GM12878 (cell line): ENCODE measurements at regions of chr6 and their contacts with region 1.

Region 1: DNA sequence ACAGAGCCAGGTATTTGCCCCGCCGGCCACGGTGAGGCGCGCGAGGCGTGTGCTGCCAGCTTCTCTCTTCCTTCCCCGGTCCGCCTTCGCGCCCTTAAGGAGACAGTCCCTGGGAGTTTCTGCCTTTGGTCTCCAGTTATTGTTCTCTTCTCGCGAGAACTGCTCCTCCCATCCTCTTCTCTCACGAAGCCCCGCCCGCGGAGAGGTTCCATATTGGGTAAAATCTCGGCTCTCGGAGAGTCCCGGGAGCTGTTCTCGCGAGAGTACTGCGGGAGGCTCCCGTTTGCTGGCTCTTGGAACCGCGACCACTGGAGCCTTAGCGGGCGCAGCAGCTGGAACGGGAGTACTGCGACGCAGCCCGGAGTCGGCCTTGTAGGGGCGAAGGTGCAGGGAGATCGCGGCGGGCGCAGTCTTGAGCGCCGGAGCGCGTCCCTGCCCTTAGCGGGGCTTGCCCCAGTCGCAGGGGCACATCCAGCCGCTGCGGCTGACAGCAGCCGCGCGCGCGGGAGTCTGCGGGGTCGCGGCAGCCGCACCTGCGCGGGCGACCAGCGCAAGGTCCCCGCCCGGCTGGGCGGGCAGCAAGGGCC is at the start of gene MAPK14:
- DNase-seq: peak; percentile 96
- ATAC-seq: peak; percentile 87
- H3K4me3 ChIP-seq: peak within 1 kb of the TSS; percentile 87
- H3K27ac ChIP-seq: peak within 1 kb of the TSS; percentile 84
- H3K4me1 ChIP-seq: no peaks in the 10 kb centered on the region; the same call in 1 of the 2 replicates
- H3K27me3 ChIP-seq: no peaks in the 10 kb centered on the region; a peak in 1 of 4 replicates
- CTCF ChIP-seq: peak; percentile 95 to 99 (median 97); a peak in 5 of 6 replicates
- EP300 ChIP-seq: no peak
- POLR2A ChIP-seq: peak; percentile 96
- RAD21 ChIP-seq: peak; percentile 94
- polyA plus RNA-seq, gene MAPK14: 12.5 to 13.7 TPM

Region 2: GRCh38 chr6:35294308-35294945 is 733.2 kb before region 1 on chr6:
- CTCF ChIA-PET with region 1: no interaction called
- POLR2A ChIA-PET with region 1: no interaction called
- RAD21 ChIA-PET with region 1: no interaction called
- SMC1A ChIA-PET with region 1: no interaction called
- in situ Hi-C with region 1: no loop called
- intact Hi-C with region 1: no loop called
- DNase-seq: no peak
- ATAC-seq: peak; percentile 34
- H3K4me3 ChIP-seq: no peak overlapping the region
- H3K27ac ChIP-seq: no peak overlapping the region
- H3K4me1 ChIP-seq: peaks cover 7% of the 10 kb centered on the region
- H3K27me3 ChIP-seq: no peaks in the 10 kb centered on the region
- CTCF ChIP-seq: peak; percentile 79 to 87 (median 79)
- EP300 ChIP-seq: no peak
- POLR2A ChIP-seq: no peak
- RAD21 ChIP-seq: peak; percentile 65

Region 3: GRCh38 chr6:35943056-35943789 is 84.4 kb before region 1 on chr6:
- CTCF ChIA-PET with region 1: no interaction called
- POLR2A ChIA-PET with region 1: no interaction called
- RAD21 ChIA-PET with region 1: no interaction called
- SMC1A ChIA-PET with region 1: no interaction called
- in situ Hi-C with region 1: no loop called
- intact Hi-C with region 1: no loop called
- DNase-seq: no peak
- ATAC-seq: no peak
- H3K4me3 ChIP-seq: no peak overlapping the region
- H3K27ac ChIP-seq: no peak overlapping the region
- H3K4me1 ChIP-seq: no peaks in the 10 kb centered on the region
- H3K27me3 ChIP-seq: no peaks in the 10 kb centered on the region
- CTCF ChIP-seq: no peak
- EP300 ChIP-seq: no peak
- POLR2A ChIP-seq: no peak
- RAD21 ChIP-seq: no peak

Region 4: GRCh38 chr6:36042618-36043260 is 15.1 kb after region 1 on chr6:
- CTCF ChIA-PET with region 1: interaction called, 17 read pairs
- POLR2A ChIA-PET with region 1: interaction called, 12 read pairs
- RAD21 ChIA-PET with region 1: interaction called, 11 read pairs
- SMC1A ChIA-PET with region 1: interaction called, 15 read pairs
- in situ Hi-C with region 1: no loop called
- intact Hi-C with region 1: no loop called
- DNase-seq: no peak
- ATAC-seq: no peak
- H3K4me3 ChIP-seq: no peak overlapping the region
- H3K27ac ChIP-seq: no peak overlapping the region
- H3K4me1 ChIP-seq: peaks cover 8% of the 10 kb centered on the region
- H3K27me3 ChIP-seq: no peaks in the 10 kb centered on the region
- CTCF ChIP-seq: no peak
- EP300 ChIP-seq: no peak
- POLR2A ChIP-seq: no peak
- RAD21 ChIP-seq: no peak

Region 5: GRCh38 chr6:36075656-36076055 is 48.1 kb after region 1 on chr6:
- CTCF ChIA-PET with region 1: interaction called, 17 read pairs
- POLR2A ChIA-PET with region 1: interaction called, 3 read pairs
- RAD21 ChIA-PET with region 1: interaction called, 5 read pairs
- SMC1A ChIA-PET with region 1: interaction called, 15 read pairs
- in situ Hi-C with region 1: no loop called
- intact Hi-C with region 1: no loop called
- DNase-seq: no peak
- ATAC-seq: 0 out of 3 replicates have a peak, but pooled peaks have one; percentile 24
- H3K4me3 ChIP-seq: no peak overlapping the region
- H3K27ac ChIP-seq: no peak overlapping the region
- H3K4me1 ChIP-seq: no peaks in the 10 kb centered on the region
- H3K27me3 ChIP-seq: no peaks in the 10 kb centered on the region
- CTCF ChIP-seq: peak; percentile 8 to 30 (median 29); a peak in 2 of 6 replicates
- EP300 ChIP-seq: no peak
- POLR2A ChIP-seq: no peak
- RAD21 ChIP-seq: 0 out of 2 replicates have a peak, but pooled peaks have one; percentile 13

Region 6: GRCh38 chr6:36094753-36095496 is 67.3 kb after region 1 on chr6:
- CTCF ChIA-PET with region 1: interaction called, 165 read pairs
- POLR2A ChIA-PET with region 1: interaction called, 27 read pairs
- RAD21 ChIA-PET with region 1: interaction called, 140 read pairs
- SMC1A ChIA-PET with region 1: interaction called, 167 read pairs
- in situ Hi-C with region 1: loop called (anchors 5 kb)
- intact Hi-C with region 1: loop called (anchors 1 kb)
- DNase-seq: peak; percentile 33
- ATAC-seq: peak; percentile 100
- H3K4me3 ChIP-seq: no peak overlapping the region
- H3K27ac ChIP-seq: peak overlapping the region; percentile 28; the same call in 1 of the 2 replicates
- H3K4me1 ChIP-seq: peaks cover 7% of the 10 kb centered on the region; the same call in 1 of the 2 replicates
- H3K27me3 ChIP-seq: no peaks in the 10 kb centered on the region
- CTCF ChIP-seq: peak; percentile 86 to 95 (median 93); a peak in 5 of 6 replicates
- EP300 ChIP-seq: no peak
- POLR2A ChIP-seq: no peak
- RAD21 ChIP-seq: peak; percentile 95

Region 7: DNA sequence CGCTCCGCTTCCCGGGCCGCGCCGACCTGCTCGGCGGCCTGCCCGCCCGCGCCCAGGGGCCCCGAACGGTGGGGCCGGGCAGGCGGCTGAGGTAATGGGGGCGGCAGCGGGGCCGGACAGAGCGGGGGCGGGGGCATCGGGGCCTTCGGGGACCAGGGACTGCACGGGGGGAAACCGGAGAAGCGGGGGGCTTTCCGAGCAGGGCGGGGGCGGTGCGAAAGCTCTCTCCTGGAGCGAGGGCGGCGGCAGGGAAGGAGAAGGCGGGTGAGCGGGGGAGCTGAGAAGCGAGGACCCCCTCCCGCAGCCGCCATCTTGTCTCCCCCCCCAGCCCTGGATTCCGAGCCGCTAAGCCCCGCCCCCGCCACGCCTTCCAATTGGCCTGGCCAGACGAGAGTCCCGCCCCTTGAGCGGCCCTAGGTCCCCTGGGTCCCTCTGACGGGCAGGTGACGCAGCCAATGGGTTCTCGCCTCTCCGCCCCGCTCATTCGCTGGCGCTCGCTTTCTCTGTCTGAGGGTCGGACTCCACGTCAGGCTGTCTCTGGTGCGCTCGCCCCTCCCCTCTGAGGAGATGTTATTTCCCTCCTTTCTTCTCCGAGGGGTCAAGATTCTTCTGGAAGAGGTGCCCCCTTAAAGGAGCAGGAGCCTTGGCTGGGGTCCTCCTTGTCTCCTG is 169.4 kb after region 1 on chr6:
- CTCF ChIA-PET with region 1: interaction called, 13 read pairs
- POLR2A ChIA-PET with region 1: interaction called, 6 read pairs
- RAD21 ChIA-PET with region 1: interaction called, 7 read pairs
- SMC1A ChIA-PET with region 1: interaction called, 14 read pairs
- in situ Hi-C with region 1: no loop called
- intact Hi-C with region 1: loop called (anchors 2 kb)
- DNase-seq: peak; percentile 88
- ATAC-seq: peak; percentile 97
- H3K4me3 ChIP-seq: peak overlapping the region; percentile 79
- H3K27ac ChIP-seq: peak overlapping the region; percentile 64
- H3K4me1 ChIP-seq: peaks cover 5% of the 10 kb centered on the region; the same call in 1 of the 2 replicates
- H3K27me3 ChIP-seq: no peaks in the 10 kb centered on the region
- CTCF ChIP-seq: no peak
- EP300 ChIP-seq: no peak
- POLR2A ChIP-seq: peak; percentile 79
- RAD21 ChIP-seq: no peak